ENCODE measurements at regions of chr7 and their contacts with region 1.

Region 1: GRCh38 chr7:139645572-139646523 is 122.4 kb downstream of the CLEC2L start:
- DNase-seq: peak; percentile 83 to 93
- ATAC-seq: peak; percentile 33 to 57 (median 42)
- H3K4me3 ChIP-seq: no peak overlapping the region
- H3K4me3 Mint-ChIP-seq: peak overlapping the region; percentile 42
- H3K27ac ChIP-seq: no peak overlapping the region
- H3K27ac Mint-ChIP-seq: peak overlapping the region; percentile 94 to 97
- H3K4me1 ChIP-seq: peaks cover 44% of the 10 kb centered on the region
- H3K4me1 Mint-ChIP-seq: peaks cover 75 to 77% of the 10 kb centered on the region in 2 donors
- H3K27me3 ChIP-seq: no peaks in the 10 kb centered on the region
- H3K27me3 Mint-ChIP-seq: no peaks in the 10 kb centered on the region
- CTCF ChIP-seq: peak; percentile 88

Region 2: DNA sequence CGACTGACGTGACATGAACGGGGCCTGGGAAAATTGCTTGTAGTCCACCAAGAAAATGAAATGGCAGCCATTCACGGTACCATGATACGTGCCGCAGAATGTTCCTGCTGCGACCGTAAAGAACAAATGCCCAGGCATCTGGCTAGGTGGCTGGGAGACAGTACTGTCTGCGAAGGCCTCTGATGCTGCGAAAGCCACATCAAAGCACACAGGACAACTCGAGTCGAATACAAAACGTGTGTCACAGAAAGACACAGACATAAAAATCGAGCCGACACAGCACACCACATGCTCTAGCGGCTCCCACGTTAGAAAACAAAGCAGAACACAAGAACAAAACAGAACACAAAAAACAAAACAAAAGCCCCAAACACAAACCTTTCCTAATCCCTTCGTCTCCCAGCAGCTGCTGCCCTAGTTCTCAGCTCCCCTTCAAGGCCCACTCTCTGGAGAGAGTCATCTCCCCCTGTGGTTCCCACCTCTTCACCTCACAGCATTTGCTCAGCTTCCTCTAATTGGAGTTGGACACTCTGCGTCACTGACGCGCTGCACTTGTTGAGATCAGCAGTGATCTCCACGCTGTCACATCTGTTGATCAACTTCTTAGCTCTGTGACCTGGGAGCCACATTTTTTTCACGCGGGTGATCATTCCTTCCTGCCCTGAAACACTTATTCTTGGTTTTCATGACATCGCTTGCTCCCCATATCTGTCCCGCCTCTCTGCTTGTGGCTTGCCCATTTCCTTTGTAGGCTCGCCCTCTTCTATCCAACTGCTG is 10.1 kb before region 1 on chr7:
- intact Hi-C with region 1: loop called (anchors 1 kb)
- DNase-seq: peak; percentile 78 to 85
- ATAC-seq: peak; percentile 93 to 96 (median 94)
- H3K4me3 ChIP-seq: no peak overlapping the region
- H3K4me3 Mint-ChIP-seq: peak overlapping the region; percentile 79
- H3K27ac ChIP-seq: peak overlapping the region; percentile 88
- H3K27ac Mint-ChIP-seq: peak overlapping the region; percentile 91 to 96
- H3K4me1 ChIP-seq: peaks cover 28% of the 10 kb centered on the region
- H3K4me1 Mint-ChIP-seq: peaks cover 45 to 58% of the 10 kb centered on the region in 2 donors
- H3K27me3 ChIP-seq: no peaks in the 10 kb centered on the region
- H3K27me3 Mint-ChIP-seq: no peaks in the 10 kb centered on the region
- CTCF ChIP-seq: no peak

Region 3: DNA sequence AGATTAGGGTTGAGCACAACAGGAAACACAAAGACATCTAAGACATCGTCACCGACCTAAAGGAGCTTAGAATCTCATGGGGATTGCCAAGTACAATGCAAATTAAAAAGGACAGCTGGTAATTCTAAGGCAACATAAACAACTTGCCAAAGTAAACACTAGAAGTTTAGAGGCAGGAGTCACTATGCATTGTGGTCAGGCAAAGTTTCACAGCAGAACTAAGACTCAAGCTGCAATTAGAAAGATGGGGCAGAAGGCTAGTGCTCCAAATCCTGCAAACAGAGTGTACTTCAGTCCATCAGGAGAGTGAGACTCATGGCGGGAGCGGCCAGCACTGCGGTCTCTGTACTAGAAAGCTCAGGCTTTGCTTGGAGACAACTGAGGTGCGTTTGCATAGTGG is 79.2 kb after region 1 on chr7:
- intact Hi-C with region 1: loop called (anchors 10 kb)
- DNase-seq: no peak
- ATAC-seq: peak; percentile 44 to 73 (median 69)
- H3K4me3 ChIP-seq: no peak overlapping the region
- H3K4me3 Mint-ChIP-seq: no peak overlapping the region
- H3K27ac ChIP-seq: peak overlapping the region; percentile 52
- H3K27ac Mint-ChIP-seq: peak overlapping the region; percentile 59 to 88
- H3K4me1 ChIP-seq: peaks cover 26% of the 10 kb centered on the region
- H3K4me1 Mint-ChIP-seq: peaks cover 50 to 56% of the 10 kb centered on the region in 2 donors
- H3K27me3 ChIP-seq: no peaks in the 10 kb centered on the region
- H3K27me3 Mint-ChIP-seq: no peaks in the 10 kb centered on the region
- CTCF ChIP-seq: no peak

Region 4: DNA sequence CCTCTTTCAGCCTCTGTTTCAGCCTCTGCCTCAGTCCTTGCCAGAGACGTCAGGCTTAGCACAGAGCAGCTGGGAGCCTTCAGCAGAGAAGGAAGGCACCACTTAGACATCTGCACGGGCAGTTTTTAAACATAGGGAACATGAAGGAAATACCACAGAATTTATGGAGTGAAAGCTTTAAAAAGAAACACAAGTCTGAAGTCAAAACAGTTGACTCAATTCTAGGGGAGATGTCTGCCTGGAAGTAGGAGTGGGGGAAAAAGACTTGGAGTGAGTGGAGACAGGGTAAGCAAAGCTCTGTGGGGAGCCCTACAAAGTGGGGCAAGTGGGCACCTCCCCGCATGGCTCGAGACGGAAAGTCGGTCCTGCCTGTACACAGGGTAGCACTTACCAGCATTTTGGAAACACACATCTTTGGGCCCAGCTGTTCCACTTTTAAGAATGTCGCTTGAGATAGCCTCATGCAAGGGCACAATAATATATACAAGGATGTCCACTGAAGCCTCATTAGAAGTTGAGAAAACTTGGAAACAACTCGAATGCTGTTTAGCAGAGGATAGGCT is 178.2 kb after region 1 on chr7:
- intact Hi-C with region 1: loop called (anchors 5 kb)
- DNase-seq: no peak
- ATAC-seq: no peak
- H3K4me3 ChIP-seq: no peak overlapping the region
- H3K4me3 Mint-ChIP-seq: no peak overlapping the region
- H3K27ac ChIP-seq: no peak overlapping the region
- H3K27ac Mint-ChIP-seq: no peak overlapping the region
- H3K4me1 ChIP-seq: peaks cover 30% of the 10 kb centered on the region
- H3K4me1 Mint-ChIP-seq: peaks cover 11 to 22% of the 10 kb centered on the region in 2 donors
- H3K27me3 ChIP-seq: no peaks in the 10 kb centered on the region
- H3K27me3 Mint-ChIP-seq: no peaks in the 10 kb centered on the region
- CTCF ChIP-seq: no peak

Region 5: GRCh38 chr7:139915864-139916716 is 270.2 kb after region 1 on chr7:
- intact Hi-C with region 1: loop called (anchors 5 kb)
- DNase-seq: peak; percentile 49 to 69
- ATAC-seq: peak; percentile 86 to 93 (median 87)
- H3K4me3 ChIP-seq: no peak overlapping the region
- H3K4me3 Mint-ChIP-seq: peak overlapping the region; percentile 37
- H3K27ac ChIP-seq: peak overlapping the region; percentile 30
- H3K27ac Mint-ChIP-seq: peak overlapping the region; percentile 86 to 91
- H3K4me1 ChIP-seq: peaks cover 33% of the 10 kb centered on the region
- H3K4me1 Mint-ChIP-seq: peaks cover 44 to 58% of the 10 kb centered on the region in 2 donors
- H3K27me3 ChIP-seq: no peaks in the 10 kb centered on the region
- H3K27me3 Mint-ChIP-seq: no peaks in the 10 kb centered on the region
- CTCF ChIP-seq: no peak

Region 6: DNA sequence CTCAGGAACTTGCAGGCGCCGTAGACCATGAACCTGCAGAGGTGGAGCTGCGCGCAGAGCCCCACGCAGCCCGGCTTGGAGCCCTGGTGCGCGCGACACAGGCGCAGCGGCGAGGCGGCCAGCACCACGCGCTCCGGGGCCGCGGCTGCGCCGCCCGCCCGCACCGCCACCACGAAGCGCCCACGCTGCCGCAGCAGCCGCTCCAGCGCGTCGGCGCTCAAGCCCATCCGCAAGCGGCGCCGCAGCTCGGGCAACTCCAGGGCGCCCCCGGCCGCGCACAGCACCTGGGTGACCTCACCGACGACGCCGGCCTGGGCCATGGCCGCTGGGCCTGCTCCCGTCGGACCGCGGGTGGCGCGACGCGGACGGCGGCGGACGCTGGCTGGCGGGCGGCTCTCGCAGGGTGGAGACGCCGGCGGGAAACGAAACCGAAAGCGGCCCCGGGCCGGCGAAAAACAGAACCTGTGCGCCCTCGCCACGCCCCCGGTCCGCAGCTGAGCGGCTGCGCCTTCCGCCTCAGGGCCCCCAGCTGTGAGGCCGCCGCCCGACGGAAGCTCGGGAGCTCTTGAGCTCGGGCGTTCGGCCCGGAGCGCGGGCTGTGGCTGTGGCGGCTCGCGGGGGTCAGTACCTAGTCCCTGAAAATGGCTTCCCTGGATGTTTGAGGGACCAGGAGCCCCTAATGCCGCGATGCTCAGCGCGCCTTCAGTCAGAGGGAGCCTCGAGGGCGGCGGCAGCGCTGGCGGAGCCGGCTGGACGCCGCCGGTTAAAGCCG is 416.9 kb after region 1 on chr7 and contains the start of gene PARP12:
- intact Hi-C with region 1: loop called (anchors 2 kb)
- DNase-seq: peak; percentile 90 to 94
- ATAC-seq: peak; percentile 85 to 95 (median 88)
- H3K4me3 ChIP-seq: peak within 1 kb of the TSS; percentile 79
- H3K4me3 Mint-ChIP-seq: peak within 1 kb of the TSS; percentile 86
- H3K27ac ChIP-seq: peak within 1 kb of the TSS; percentile 95
- H3K27ac Mint-ChIP-seq: peak within 1 kb of the TSS; percentile 80 to 86
- H3K4me1 ChIP-seq: peaks cover 36% of the 10 kb centered on the region
- H3K4me1 Mint-ChIP-seq: peaks cover 32 to 43% of the 10 kb centered on the region in 2 donors
- H3K27me3 ChIP-seq: no peaks in the 10 kb centered on the region
- H3K27me3 Mint-ChIP-seq: no peaks in the 10 kb centered on the region
- CTCF ChIP-seq: no peak
- total RNA-seq, gene PARP12: 116 to 151 (median 130) TPM

Region 7: DNA sequence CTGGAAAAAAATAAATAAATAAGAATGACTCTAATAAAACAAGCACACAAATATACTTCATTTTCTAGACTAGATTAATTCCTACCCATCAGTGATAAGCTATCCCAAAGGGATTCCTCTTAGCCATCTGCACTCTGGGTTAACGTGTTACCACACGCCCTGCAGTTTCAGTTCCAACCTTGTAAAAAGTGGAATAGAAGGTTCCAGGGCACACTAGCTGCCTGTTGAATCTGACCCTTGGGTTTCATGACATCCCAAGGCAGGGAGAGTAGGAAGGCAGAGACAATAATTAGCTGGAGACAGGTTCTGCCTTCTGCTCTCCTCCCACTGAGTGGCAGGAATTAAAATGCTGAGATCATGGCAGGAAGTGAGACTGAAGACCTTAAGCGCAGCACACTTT is 719.0 kb after region 1 on chr7:
- intact Hi-C with region 1: no loop called
- DNase-seq: no peak
- ATAC-seq: no peak
- H3K4me3 ChIP-seq: no peak overlapping the region
- H3K4me3 Mint-ChIP-seq: no peak overlapping the region
- H3K27ac ChIP-seq: no peak overlapping the region
- H3K27ac Mint-ChIP-seq: no peak overlapping the region
- H3K4me1 ChIP-seq: no peaks in the 10 kb centered on the region
- H3K4me1 Mint-ChIP-seq: peaks cover under 1% of the 10 kb centered on the region in 2 donors
- H3K27me3 ChIP-seq: no peaks in the 10 kb centered on the region
- H3K27me3 Mint-ChIP-seq: no peaks in the 10 kb centered on the region
- CTCF ChIP-seq: no peak

Measured in natural killer cell (primary cell).